ENCODE measurements at regions of chr9 and their contacts with region 1.

Region 1: DNA sequence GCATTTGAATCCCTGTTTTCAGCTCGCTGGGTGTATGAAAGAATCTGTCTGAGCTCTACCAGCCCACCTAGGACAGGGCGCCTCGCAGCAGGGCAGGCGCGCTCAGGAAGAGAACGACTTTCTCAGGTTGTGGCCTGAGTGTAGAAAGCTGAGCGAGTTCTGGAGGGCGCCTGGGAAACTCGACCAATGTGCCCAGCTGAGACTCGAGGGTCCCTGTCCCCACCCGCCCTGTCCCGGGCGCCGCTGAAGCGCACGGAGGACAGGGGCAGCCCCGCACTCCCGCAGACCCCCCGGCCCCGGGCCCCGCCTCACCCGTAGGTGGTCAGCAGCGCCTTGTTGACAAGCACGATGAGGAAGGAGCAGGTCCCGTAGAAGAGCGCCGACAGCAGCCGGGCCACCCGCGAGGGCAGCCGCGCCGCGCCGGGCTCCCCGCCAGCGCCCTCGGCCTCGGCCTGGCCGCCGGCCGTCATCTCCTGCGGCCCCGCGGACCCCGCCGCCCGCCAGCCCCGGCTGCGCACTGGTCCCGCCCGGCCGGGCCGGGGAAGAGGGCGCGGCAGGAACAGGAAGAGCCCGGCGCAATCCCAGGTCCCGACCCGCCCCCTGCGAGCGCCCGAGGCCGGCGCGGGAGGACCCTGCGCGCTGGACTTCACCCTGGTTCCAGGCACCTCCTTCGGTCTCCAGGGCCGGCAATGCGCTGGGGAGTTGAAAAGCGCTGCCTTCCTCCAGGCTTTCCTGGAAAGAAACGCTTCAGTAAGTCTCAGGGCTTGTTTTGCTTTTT is at the start of gene SLC35D2:
- DNase-seq: peak; percentile 58
- ATAC-seq: peak; percentile 92
- H3K4me3 ChIP-seq: peak within 1 kb of the TSS; percentile 83
- H3K27ac ChIP-seq: no peak within 1 kb of the TSS
- H3K4me1 ChIP-seq: peaks cover 10% of the 10 kb centered on the region
- H3K27me3 ChIP-seq: no peaks in the 10 kb centered on the region
- CTCF ChIP-seq: no peak
- total RNA-seq, gene SLC35D2: 9.6 and 21.5 TPM in 2 replicates

Region 2: DNA sequence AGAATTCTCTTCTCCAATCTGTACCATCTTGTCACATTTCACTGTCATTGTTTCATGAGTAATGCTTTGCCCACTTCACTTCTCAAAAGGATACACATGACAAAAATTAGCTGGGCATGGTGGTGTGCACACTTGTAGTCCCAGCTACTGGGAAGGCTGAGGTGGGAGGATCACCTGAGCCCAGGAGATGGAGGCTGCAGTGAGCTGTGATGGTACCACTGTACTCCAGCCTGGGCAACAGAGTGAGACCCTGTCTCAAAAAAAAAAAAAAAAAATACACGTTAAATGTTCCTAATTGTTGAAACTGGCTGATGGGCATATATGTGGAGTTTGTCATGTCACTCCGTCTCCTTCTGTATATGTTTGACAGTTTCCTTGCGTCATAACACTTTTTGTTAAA is 45.1 kb before region 1 on chr9:
- CTCF ChIA-PET with region 1: no interaction called
- POLR2A ChIA-PET with region 1: no interaction called
- intact Hi-C with region 1: loop called (anchors 5 kb)
- DNase-seq: no peak
- ATAC-seq: no peak
- H3K4me3 ChIP-seq: no peak overlapping the region
- H3K27ac ChIP-seq: no peak overlapping the region
- H3K4me1 ChIP-seq: peaks cover 21% of the 10 kb centered on the region
- H3K27me3 ChIP-seq: no peaks in the 10 kb centered on the region
- CTCF ChIP-seq: no peak

Region 3: GRCh38 chr9:96453625-96454024 is 70.3 kb after region 1 on chr9:
- CTCF ChIA-PET with region 1: no interaction called
- POLR2A ChIA-PET with region 1: no interaction called
- intact Hi-C with region 1: no loop called
- DNase-seq: peak; percentile 64
- ATAC-seq: 0 out of 2 replicates have a peak, but pooled peaks have one; percentile 10
- H3K4me3 ChIP-seq: no peak overlapping the region
- H3K27ac ChIP-seq: no peak overlapping the region
- H3K4me1 ChIP-seq: peaks cover 15% of the 10 kb centered on the region
- H3K27me3 ChIP-seq: no peaks in the 10 kb centered on the region
- CTCF ChIP-seq: peak; percentile 58

Region 4: DNA sequence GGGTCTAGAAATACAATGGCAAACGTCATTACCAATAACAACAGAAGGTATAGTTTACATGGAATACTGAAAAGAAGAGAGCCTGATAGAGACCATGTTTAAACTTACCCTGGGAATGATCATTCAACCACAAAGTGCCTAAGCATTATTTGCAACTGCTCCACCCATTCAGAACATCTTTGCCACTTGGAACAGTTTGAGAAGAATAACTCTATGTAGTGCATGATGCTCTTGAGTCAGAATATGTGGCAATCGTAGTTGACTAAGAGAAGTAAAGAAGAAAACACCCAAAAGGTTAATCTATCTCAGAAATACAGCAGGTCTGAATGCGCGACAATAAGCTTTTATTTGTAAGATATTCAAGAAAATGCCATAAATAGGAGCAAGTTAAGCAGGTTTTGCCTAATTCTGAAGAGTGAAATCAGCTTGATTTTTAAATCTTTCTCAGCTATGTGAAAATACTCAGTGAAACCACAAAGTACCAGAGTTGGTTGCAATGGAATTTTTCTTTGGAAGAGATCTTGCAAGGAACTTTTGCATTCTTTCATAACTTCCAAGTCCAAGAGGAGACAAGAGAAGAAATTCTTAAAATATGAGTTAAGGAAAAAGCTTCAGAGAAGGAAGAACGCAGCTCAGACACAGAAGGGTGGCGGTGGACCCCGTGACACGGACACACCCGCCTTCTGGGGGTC is 130.9 kb after region 1 on chr9:
- CTCF ChIA-PET with region 1: no interaction called
- POLR2A ChIA-PET with region 1: no interaction called
- intact Hi-C with region 1: no loop called
- DNase-seq: no peak
- ATAC-seq: no peak
- H3K4me3 ChIP-seq: no peak overlapping the region
- H3K27ac ChIP-seq: no peak overlapping the region
- H3K4me1 ChIP-seq: no peaks in the 10 kb centered on the region
- H3K27me3 ChIP-seq: no peaks in the 10 kb centered on the region
- CTCF ChIP-seq: no peak

Measured in PC-3 (cell line).